ENCODE measurements at regions of chr11 and their contacts with region 1.

Region 1: DNA sequence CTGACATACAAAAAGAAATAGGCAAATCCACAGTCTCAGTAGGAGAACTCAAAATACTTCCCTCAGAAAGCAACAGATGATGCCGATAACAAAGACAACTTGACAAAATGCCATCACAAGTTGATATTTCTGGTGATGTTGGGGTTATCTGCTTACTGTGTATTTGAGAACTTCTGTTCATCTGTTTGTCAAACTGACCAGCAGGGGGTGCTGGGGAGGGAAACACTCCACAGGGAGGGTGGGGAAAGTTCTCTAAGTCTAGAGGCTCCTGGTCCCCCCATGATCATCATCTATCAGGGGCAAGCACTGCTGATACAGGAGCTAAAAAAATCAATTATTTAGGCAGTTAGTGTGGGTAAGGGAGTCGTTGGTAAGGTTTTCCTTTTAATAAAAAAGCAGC is 19.2 kb downstream of the GLYATL1 start:
- DNase-seq: peak; percentile 35
- H3K4me3 Mint-ChIP-seq: no peak overlapping the region
- H3K27ac Mint-ChIP-seq: no peak overlapping the region
- H3K4me1 Mint-ChIP-seq: no peaks in the 10 kb centered on the region
- H3K27me3 Mint-ChIP-seq: peaks cover 56% of the 10 kb centered on the region
- CTCF ChIP-seq: no peak

Region 2: DNA sequence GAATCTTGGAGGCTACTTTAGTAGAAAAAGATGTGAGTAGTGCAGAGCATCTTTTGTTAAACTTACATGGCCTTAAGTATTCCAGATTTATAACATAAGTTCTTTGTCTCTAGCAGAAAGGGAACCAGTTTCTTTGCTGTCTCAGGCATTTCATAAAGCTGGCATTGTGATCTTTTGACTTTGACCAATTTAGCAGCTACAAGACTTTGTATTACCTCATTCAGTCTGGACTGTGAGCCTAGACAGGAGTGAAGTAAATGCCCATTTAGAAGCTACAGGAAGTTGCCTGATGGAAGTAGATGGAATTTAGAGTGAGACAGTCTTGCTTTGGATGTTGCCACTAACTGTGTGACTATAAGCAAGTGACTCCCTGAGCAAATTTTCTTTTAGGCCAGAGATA is 201.1 kb before region 1 on chr11:
- CTCF ChIA-PET with region 1: no interaction called
- intact Hi-C with region 1: no loop called
- DNase-seq: no peak
- H3K4me3 Mint-ChIP-seq: no peak overlapping the region
- H3K27ac Mint-ChIP-seq: no peak overlapping the region
- H3K4me1 Mint-ChIP-seq: no peaks in the 10 kb centered on the region
- H3K27me3 Mint-ChIP-seq: peaks cover 1% of the 10 kb centered on the region
- CTCF ChIP-seq: no peak

Region 3: GRCh38 chr11:58829786-58830185 is 128.7 kb before region 1 on chr11:
- CTCF ChIA-PET with region 1: interaction called, 10 read pairs
- intact Hi-C with region 1: no loop called
- DNase-seq: peak; percentile 10
- H3K4me3 Mint-ChIP-seq: peak overlapping the region; percentile 64
- H3K27ac Mint-ChIP-seq: no peak overlapping the region
- H3K4me1 Mint-ChIP-seq: peaks cover 13% of the 10 kb centered on the region
- H3K27me3 Mint-ChIP-seq: no peaks in the 10 kb centered on the region
- CTCF ChIP-seq: no peak